ENCODE measurements at regions of chr6 and their contacts with region 1.

Region 1: DNA sequence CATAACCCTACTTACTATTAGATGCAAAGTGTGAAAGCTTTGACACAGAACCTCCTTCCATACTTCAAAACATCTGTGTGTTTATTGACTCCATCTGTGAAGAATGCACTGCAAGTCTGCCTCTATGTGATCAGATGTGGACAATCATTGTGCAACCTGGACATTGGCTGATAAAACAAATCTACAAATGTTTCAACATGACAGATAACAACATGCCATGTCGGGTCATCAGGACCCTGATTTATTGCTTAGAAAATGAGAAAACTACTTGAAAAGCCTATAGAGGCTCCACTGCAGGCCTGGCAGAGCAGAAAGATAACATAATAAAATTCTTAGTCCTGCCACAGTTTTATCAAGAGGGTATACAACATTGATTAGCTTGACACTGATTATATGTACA is 1286.4 kb downstream of the GRIK2 start:
- DNase-seq: no peak
- ATAC-seq: no peak
- H3K4me3 ChIP-seq: no peak overlapping the region
- H3K27ac ChIP-seq: no peak overlapping the region
- H3K4me1 ChIP-seq: no peaks in the 10 kb centered on the region
- H3K27me3 ChIP-seq: no peaks in the 10 kb centered on the region
- CTCF ChIP-seq: no peak
- POLR2A ChIP-seq: no peak
- RAD21 ChIP-seq: no peak

Region 2: DNA sequence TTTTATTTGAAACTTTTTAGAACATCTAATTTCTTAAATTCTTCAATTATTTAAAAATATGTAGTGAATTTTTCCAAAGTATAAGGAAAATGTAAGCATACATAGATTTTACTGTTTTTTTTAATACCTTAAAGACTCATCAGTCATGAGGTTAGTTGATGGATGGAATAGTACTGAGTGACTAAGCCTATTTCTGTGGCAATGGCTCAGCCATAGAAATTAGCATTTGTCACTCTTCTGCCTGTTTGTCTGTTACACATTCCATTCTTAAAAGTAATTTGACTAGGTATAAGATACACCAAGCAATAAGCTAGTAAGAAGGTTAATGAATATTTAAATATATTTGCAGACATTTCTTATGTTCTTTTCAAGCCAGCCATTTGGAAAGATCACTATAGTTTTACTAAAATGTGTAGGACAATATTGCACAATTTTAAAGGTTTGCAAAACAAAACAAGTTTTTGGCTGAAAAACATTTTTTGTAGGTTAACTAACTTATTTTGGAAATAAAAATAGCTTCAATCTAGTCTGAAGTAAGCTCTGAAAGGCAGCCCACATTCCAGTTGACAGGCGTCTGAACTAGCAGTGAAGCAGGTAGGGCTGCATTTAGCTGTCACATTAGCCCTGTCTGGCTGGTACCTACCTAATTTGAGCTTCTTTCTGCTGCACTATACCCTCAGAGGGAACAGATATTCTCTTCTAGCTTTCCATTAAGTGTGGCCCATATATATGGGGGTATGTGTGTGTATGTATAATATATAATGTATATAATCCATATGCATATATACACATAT is 900.6 kb before region 1 on chr6:
- CTCF ChIA-PET with region 1: no interaction called
- POLR2A ChIA-PET with region 1: no interaction called
- dilution Hi-C with region 1: no loop called
- in situ Hi-C with region 1: no loop called
- intact Hi-C with region 1: loop called (anchors 10 kb)
- DNase-seq: peak; percentile 52
- ATAC-seq: no peak
- H3K4me3 ChIP-seq: no peak overlapping the region
- H3K27ac ChIP-seq: no peak overlapping the region
- H3K4me1 ChIP-seq: no peaks in the 10 kb centered on the region
- H3K27me3 ChIP-seq: no peaks in the 10 kb centered on the region
- CTCF ChIP-seq: no peak
- POLR2A ChIP-seq: no peak
- RAD21 ChIP-seq: no peak

Region 3: GRCh38 chr6:102520966-102521365 is 158.9 kb before region 1 on chr6:
- CTCF ChIA-PET with region 1: no interaction called
- POLR2A ChIA-PET with region 1: no interaction called
- dilution Hi-C with region 1: no loop called
- in situ Hi-C with region 1: no loop called
- intact Hi-C with region 1: no loop called
- DNase-seq: no peak
- ATAC-seq: no peak
- H3K4me3 ChIP-seq: no peak overlapping the region
- H3K27ac ChIP-seq: no peak overlapping the region
- H3K4me1 ChIP-seq: no peaks in the 10 kb centered on the region
- H3K27me3 ChIP-seq: no peaks in the 10 kb centered on the region
- CTCF ChIP-seq: no peak
- POLR2A ChIP-seq: no peak
- RAD21 ChIP-seq: no peak

Region 4: DNA sequence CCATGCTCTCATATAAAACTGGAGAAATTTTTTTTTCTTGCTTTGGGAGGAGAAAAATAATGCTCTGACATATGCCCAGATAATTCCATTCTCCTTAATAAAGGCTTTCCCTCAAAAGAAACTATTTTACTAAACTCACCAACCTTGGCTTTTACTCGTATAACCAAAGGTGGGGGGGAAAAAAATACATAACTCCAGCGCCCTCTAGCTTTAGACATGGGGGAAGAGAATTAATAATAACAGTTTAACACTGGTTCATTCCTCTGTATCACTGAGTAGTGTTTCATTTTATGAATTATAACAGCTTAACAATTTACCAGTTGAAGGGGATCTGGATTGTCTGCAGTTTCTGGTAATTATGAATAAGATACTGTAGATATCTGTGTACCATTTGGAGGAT is 60.3 kb before region 1 on chr6:
- CTCF ChIA-PET with region 1: no interaction called
- POLR2A ChIA-PET with region 1: no interaction called
- dilution Hi-C with region 1: no loop called
- in situ Hi-C with region 1: no loop called
- intact Hi-C with region 1: no loop called
- DNase-seq: peak; percentile 1
- ATAC-seq: no peak
- H3K4me3 ChIP-seq: no peak overlapping the region
- H3K27ac ChIP-seq: no peak overlapping the region
- H3K4me1 ChIP-seq: no peaks in the 10 kb centered on the region
- H3K27me3 ChIP-seq: no peaks in the 10 kb centered on the region
- CTCF ChIP-seq: peak; percentile 50
- POLR2A ChIP-seq: no peak
- RAD21 ChIP-seq: peak; percentile 52

Region 5: DNA sequence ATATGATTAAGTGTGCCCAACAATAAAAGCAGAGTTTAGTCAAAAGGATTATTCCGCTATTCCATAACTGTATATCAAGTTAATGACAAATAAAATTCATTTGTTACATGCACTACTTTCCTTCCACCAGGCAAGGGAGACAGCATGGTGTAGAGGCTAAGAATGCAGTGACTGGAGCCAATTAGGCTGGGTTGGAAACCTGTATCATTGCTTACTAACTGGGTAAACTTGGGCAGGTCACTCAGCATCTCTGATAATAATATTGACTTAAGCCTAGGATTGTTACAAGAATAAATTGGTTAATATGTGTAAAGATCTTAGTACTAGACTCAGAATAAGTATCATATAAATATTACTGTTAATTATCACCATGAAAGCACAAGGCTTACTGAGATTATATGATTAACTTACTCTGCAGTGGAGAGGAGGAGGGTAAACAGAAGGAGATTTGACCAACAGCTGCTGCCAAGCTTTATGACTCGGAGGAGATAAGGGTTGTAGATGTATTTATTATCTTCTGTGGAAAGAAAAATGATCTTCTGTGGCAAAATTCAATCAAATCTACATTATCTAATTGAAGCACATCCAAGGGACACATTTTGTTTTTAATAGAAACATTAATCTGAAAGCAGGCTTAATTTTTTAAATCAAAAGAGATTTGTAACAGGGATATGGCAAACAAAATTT is 173.5 kb after region 1 on chr6:
- CTCF ChIA-PET with region 1: no interaction called
- POLR2A ChIA-PET with region 1: no interaction called
- dilution Hi-C with region 1: no loop called
- in situ Hi-C with region 1: no loop called
- intact Hi-C with region 1: no loop called
- DNase-seq: no peak
- ATAC-seq: no peak
- H3K4me3 ChIP-seq: no peak overlapping the region
- H3K27ac ChIP-seq: no peak overlapping the region
- H3K4me1 ChIP-seq: no peaks in the 10 kb centered on the region
- H3K27me3 ChIP-seq: no peaks in the 10 kb centered on the region
- CTCF ChIP-seq: no peak
- POLR2A ChIP-seq: no peak
- RAD21 ChIP-seq: no peak